OCI-LY7 (cell line): ENCODE measurements at regions of chr4 and their contacts with region 1.

Region 1: GRCh38 chr4:82462415-82462831 is 32.0 kb downstream of the ENOPH1 start:
- DNase-seq: peak; percentile 77
- H3K4me3 ChIP-seq: no peak overlapping the region
- H3K27ac ChIP-seq: no peak overlapping the region
- H3K4me1 ChIP-seq: no peaks in the 10 kb centered on the region
- CTCF ChIP-seq: peak; percentile 73

Region 2: GRCh38 chr4:82388405-82388804 is 74.0 kb before region 1 on chr4:
- CTCF ChIA-PET with region 1: no interaction called
- POLR2A ChIA-PET with region 1: no interaction called
- intact Hi-C with region 1: no loop called
- DNase-seq: peak; percentile 30
- H3K4me3 ChIP-seq: no peak overlapping the region
- H3K27ac ChIP-seq: no peak overlapping the region
- H3K4me1 ChIP-seq: no peaks in the 10 kb centered on the region
- CTCF ChIP-seq: peak; percentile 61

Region 3: GRCh38 chr4:82508806-82509428 is 46.5 kb after region 1 on chr4:
- CTCF ChIA-PET with region 1: interaction called, 14 read pairs
- POLR2A ChIA-PET with region 1: no interaction called
- intact Hi-C with region 1: no loop called
- DNase-seq: no peak
- H3K4me3 ChIP-seq: no peak overlapping the region
- H3K27ac ChIP-seq: no peak overlapping the region
- H3K4me1 ChIP-seq: no peaks in the 10 kb centered on the region
- CTCF ChIP-seq: no peak

Region 4: DNA sequence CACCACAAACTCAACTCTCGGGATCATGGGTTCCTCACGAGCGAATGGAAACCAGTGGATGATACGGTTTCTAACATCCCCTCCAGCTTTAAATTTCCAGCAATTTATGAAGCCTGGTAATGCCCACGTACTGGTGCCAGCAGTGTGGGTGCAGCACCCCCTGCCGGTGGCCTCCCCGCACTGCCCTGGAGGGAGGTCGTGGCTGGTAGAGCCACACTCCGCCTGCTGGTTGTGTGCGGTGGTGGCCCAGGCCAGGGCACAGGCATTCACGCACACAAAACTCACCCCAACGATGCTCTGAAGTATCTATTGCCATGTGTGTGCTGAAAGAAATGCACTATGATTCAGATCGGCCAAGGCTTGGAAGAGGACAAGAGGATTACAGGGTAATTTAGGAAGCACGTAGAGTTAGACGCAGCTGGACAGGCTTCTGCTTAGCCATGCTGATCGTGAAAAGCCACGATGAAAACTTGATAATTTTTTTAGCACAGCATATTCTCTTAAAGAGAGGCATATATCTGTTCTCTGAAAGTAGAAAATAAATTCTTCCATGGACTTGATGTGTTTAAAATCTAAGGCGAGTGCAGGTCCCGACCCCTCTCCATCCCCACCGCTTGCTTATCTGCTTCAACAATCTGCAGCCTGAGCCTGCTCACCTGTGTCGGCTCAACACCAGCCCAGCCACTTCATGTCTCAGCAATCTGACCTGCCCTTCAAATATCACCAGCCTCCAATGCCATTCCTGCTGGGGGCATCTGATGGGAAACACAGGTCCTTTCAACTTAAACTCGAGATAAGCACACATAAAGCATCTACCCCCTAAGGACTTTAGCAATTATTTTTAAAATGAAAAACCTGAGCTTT is 277.1 kb after region 1 on chr4:
- CTCF ChIA-PET with region 1: no interaction called
- POLR2A ChIA-PET with region 1: no interaction called
- intact Hi-C with region 1: loop called (anchors 1 kb)
- DNase-seq: peak; percentile 71
- H3K4me3 ChIP-seq: no peak overlapping the region
- H3K27ac ChIP-seq: no peak overlapping the region
- H3K4me1 ChIP-seq: no peaks in the 10 kb centered on the region
- CTCF ChIP-seq: peak; percentile 99